Mammary epithelial cell (primary cell): ENCODE measurements at regions of chr16 and their contacts with region 1.

Region 1: DNA sequence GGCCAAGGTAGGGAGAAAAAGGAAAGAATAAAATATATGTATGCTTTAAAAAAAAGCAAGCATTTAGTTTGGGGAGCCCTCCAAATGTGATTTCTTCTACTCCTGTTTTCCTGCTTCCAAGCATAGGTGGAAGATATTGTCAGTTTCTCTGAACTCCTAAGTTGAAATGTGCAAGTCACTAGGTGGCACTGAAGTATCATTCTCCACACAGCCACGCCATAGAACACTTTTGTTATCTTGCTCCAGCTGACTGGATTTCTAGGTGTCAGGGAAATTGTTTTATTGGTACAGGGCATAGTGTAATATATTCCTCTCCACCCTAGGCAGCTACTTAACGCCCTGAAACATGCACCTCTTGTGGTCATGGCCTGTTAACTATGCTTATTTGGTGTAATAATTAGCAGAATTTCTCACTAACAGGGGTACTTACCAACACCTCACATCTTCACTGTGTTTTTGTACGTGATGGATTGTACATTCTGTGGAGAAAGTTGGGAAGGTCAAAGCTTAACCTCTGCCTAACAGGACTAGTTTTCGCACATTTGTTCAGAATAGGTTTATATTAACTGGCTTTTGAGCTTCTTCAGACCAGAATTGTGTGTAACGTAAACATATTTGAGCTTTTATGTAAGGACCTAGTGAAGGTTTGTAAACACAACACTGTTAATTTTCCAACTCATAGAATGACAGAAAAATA is 69.3 kb downstream of the FTO start:
- DNase-seq: peak; percentile 72
- H3K4me3 ChIP-seq: no peak overlapping the region
- H3K27ac ChIP-seq: peak overlapping the region; percentile 11
- H3K4me1 ChIP-seq: peaks cover 60% of the 10 kb centered on the region
- H3K27me3 ChIP-seq: no peaks in the 10 kb centered on the region
- CTCF ChIP-seq: peak; percentile 70 to 81

Region 2: GRCh38 chr16:53549970-53550690 is 223.2 kb before region 1 on chr16:
- CTCF ChIA-PET with region 1: no interaction called
- dilution Hi-C with region 1: no loop called
- in situ Hi-C with region 1: no loop called
- intact Hi-C with region 1: loop called (anchors 1 kb)
- DNase-seq: peak; percentile 60
- H3K4me3 ChIP-seq: no peak overlapping the region
- H3K27ac ChIP-seq: no peak overlapping the region
- H3K4me1 ChIP-seq: no peaks in the 10 kb centered on the region
- H3K27me3 ChIP-seq: no peaks in the 10 kb centered on the region
- CTCF ChIP-seq: peak; percentile 72 to 76

Region 3: DNA sequence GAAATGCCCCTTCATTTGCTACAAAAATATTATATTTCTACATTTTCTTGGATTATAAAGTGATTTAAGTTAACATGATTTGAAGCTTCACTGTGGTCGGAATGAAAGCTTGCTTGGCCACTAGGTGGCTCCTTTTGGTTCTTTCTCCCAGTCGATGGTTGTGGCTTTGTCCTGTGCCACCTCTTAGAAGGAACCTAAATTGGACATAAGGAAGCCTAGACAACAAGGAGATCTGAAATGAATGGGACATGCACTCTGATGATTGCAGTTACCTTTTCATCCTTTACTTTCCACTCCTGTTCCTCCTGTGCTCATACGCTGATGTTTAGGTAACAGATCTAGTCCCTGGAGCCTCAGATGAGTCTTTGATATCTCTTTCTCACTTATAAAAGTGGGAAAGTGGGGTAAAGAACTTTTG is 30.1 kb before region 1 on chr16:
- CTCF ChIA-PET with region 1: no interaction called
- dilution Hi-C with region 1: no loop called
- in situ Hi-C with region 1: no loop called
- intact Hi-C with region 1: loop called (anchors 1 kb)
- DNase-seq: peak; percentile 27
- H3K4me3 ChIP-seq: no peak overlapping the region
- H3K27ac ChIP-seq: no peak overlapping the region
- H3K4me1 ChIP-seq: peaks cover 46% of the 10 kb centered on the region
- H3K27me3 ChIP-seq: no peaks in the 10 kb centered on the region
- CTCF ChIP-seq: peak; percentile 65 to 70

Region 4: DNA sequence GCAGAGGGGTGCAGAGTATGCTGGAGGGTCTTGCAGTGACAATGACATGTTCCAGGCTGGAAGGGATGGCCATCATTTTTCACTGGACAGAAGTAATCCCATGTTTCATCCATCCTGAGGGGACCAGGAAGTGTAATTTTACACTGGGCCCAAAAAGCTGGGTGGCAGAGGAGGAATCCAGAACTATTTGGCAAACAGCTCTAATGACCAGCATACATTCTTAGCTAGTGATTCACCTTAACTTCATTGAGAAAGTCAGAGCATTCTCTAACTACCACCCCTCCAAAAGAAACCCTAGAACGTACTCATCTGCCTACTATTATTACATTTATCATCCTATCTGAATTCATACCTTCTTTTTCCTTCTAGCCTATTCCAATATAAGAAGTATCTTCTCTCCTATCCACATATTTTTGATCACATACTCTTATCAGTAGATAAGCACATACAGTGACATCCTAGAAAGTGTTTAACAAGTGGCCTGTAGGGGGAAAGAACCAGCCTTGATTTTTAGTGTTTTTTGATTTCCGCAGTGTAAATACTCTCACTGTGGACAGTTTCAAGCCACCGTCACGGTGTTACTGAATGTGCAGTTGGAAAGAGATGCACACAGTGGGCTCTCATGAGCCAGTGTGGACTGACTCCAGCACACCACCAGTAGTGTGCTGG is 48.8 kb after region 1 on chr16:
- CTCF ChIA-PET with region 1: no interaction called
- dilution Hi-C with region 1: no loop called
- in situ Hi-C with region 1: no loop called
- intact Hi-C with region 1: no loop called
- DNase-seq: peak; percentile 61
- H3K4me3 ChIP-seq: no peak overlapping the region
- H3K27ac ChIP-seq: peak overlapping the region; percentile 70
- H3K4me1 ChIP-seq: peaks cover 37% of the 10 kb centered on the region
- H3K27me3 ChIP-seq: no peaks in the 10 kb centered on the region
- CTCF ChIP-seq: peak; percentile 17 to 33

Region 5: DNA sequence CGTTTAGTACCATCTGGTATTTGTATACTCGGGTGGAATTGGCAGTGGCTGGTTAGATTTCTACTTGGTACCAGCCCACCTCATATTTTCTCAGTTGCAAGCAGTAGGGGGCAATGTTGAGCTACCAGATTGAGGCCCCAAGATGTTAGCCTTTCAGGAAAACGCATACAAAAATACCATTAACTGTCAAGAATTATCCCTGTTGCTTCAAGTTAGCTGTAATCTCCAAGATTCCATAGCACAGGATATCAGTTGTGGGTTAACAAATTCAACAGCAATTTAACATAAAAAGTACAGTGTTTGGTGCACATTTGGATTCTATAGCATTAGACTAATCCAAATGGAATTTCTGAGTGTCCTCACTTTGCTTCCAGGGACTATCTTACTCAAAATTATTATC is 118.9 kb after region 1 on chr16:
- CTCF ChIA-PET with region 1: interaction called, 6 read pairs
- dilution Hi-C with region 1: no loop called
- in situ Hi-C with region 1: no loop called
- intact Hi-C with region 1: loop called (anchors 1 kb)
- DNase-seq: peak; percentile 51
- H3K4me3 ChIP-seq: no peak overlapping the region
- H3K27ac ChIP-seq: peak overlapping the region; percentile 5
- H3K4me1 ChIP-seq: peaks cover 26% of the 10 kb centered on the region
- H3K27me3 ChIP-seq: no peaks in the 10 kb centered on the region
- CTCF ChIP-seq: peak; percentile 53 to 69

Region 6: DNA sequence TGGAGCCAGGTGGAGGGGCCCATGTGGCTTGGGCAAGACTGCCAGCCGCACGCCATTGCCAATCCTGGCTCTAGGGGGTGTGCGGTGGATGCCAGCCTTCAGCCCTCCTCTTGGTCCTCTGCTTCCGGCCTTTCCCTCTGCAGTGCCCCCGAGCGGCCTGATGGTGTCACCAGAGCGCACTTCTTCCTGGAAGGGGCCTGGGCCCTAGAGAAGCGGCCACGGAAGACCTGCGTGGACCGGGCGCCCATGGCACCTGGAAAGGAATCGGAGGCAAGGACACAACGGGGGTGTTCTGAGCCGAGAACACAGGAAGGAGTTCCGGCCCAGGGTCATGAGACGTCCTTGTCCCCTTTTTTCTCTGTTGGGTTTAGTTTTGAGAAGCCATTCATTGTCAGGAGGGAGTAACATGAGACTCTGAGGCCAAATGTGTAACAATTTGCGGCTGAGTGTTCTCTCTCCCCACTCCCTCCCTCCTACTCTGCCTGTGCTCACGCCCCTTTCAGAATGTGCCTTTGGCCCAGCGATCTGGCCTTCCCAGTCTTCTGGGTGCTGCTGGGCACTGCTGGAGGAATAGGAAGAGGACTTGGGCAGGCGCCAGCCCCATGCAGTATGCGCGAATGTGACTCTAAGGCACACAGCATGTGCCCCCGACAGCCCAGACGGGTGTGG is 420.5 kb after region 1 on chr16:
- CTCF ChIA-PET with region 1: no interaction called
- dilution Hi-C with region 1: no loop called
- in situ Hi-C with region 1: no loop called
- intact Hi-C with region 1: loop called (anchors 5 kb)
- DNase-seq: peak; percentile 58
- H3K4me3 ChIP-seq: no peak overlapping the region
- H3K27ac ChIP-seq: no peak overlapping the region
- H3K4me1 ChIP-seq: peaks cover 12% of the 10 kb centered on the region
- H3K27me3 ChIP-seq: no peaks in the 10 kb centered on the region
- CTCF ChIP-seq: peak; percentile 84 to 93

Region 7: DNA sequence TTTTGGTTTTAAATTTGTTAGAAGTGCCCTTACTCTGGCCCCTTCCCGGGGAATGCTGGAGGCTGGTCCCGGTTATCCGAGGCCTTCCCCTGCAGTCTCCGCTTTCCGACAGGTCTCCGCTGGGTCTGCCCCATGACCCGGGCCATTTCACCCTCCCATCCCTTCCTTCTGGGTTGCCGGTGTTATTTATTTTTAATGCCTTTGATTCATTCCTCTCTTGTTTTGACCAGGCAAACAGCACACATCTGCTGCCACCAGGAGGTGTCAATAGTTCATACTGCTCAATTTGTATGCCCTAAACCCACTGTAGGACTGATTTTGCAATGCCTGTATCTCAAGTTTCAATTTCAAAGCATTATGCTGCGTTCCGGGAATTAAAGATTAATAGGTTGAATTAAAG is 1044.1 kb after region 1 on chr16:
- CTCF ChIA-PET with region 1: no interaction called
- dilution Hi-C with region 1: no loop called
- in situ Hi-C with region 1: no loop called
- intact Hi-C with region 1: loop called (anchors 5 kb)
- DNase-seq: peak; percentile 59
- H3K4me3 ChIP-seq: no peak overlapping the region
- H3K27ac ChIP-seq: no peak overlapping the region
- H3K4me1 ChIP-seq: peaks cover 2% of the 10 kb centered on the region
- H3K27me3 ChIP-seq: no peaks in the 10 kb centered on the region
- CTCF ChIP-seq: peak; percentile 56 to 83